Left colon (tissue), 2 donors: ENCODE measurements at regions of chr2 and their contacts with region 1.

Region 1: GRCh38 chr2:238263204-238264071 is 23.6 kb upstream of the HES6 start:
- DNase-seq: peak; percentile 93 to 94
- ATAC-seq: peak; percentile 88

Region 2: GRCh38 chr2:237858294-237859081 is 404.9 kb before region 1 on chr2:
- intact Hi-C with region 1: loop called in 1 of 2 experiments (anchors 10 kb)
- DNase-seq: peak; percentile 69
- ATAC-seq: peak; percentile 82

Region 3: GRCh38 chr2:238160206-238161109 is 103.0 kb before region 1 on chr2:
- intact Hi-C with region 1: loop called in 1 of 2 experiments (anchors 10 kb)
- DNase-seq: peak; percentile 22 to 31
- ATAC-seq: peak; percentile 11

Region 4: GRCh38 chr2:238362626-238363025 is 99.2 kb after region 1 on chr2:
- intact Hi-C with region 1: no loop called
- DNase-seq: no peak
- ATAC-seq: no peak

Region 5: DNA sequence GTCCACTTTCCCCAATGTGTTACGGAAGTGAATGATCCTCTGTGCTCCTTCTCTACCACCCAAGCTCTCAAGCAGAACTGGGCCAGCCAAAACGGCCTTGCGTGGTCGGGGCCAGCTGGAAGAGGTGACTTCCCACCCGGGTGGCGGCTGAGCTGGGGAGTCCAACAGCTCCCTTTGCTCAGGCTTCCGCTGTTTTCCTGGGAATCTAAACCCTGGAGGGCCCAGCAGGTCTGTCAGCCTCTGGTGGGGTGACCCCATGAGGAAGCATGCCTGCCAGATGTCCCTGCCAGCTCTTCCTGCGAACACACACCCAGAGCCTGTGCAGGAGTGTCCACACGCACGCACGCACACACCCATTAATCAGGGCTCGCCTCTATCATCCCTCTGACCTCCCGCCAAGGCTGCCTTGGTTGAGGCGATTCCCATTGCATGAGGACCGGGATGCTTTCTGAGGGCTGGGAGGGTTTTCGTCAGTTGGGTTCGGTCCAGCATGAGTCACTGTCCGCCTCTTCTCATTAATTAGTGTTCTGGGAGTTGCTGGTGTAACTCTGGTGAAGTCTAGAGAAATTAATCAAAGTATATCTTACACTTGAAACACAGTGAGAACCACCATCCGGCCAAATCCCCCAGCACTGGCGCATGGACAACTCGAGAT is 675.1 kb after region 1 on chr2:
- intact Hi-C with region 1: no loop called
- DNase-seq: peak; percentile 45 to 68
- ATAC-seq: no peak